ENCODE measurements at regions of chr12 and their contacts with region 1.

Region 1: DNA sequence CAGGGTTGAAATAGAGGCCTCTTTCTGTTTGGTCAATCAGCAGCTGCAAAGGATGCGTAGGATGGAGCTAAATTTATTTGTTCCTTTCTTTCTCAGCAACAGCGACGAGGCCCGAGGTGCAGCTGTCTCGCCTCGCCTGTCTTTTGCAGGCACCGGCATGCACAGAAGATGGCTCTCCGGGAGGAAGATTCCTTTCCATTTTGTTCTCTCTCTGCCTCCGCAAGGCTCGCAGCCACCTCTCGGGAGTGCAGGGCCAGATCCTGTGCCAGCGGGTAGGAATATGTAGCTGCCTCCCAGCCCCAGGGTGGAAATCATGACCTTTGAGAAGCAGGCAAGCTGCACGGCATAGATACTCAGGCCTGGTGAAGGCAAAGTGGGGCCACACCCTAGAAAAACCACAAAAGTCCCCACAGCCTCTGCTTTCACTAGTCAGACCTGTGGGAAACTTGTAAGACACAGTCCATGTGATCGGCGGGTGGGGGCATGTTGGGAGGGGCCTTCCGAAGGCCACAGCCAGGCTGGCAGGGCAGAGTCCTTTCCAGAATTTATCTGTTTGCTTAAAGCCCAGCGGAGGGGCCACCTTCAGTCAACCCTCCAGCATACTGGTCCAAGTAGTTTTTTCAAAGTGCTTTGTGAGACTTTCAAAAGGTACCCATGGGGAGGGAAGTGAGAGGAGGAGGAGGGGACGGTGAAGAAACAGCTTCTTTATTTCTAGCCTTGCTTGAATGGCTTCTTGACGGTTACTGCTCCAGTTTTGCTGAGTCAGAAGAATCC is at the start of gene MAP1LC3B2:
- DNase-seq: peak; percentile 53 to 85 (median 77)
- ATAC-seq: peak; percentile 92
- H3K4me3 ChIP-seq: peak within 1 kb of the TSS; percentile 54
- H3K4me3 Mint-ChIP-seq: peak within 1 kb of the TSS; percentile 70 to 90 (median 86)
- H3K27ac ChIP-seq: peak within 1 kb of the TSS; percentile 49
- H3K27ac Mint-ChIP-seq: peak within 1 kb of the TSS; percentile 88 to 99 (median 96)
- H3K4me1 ChIP-seq: peaks cover 29% of the 10 kb centered on the region in 2 donors
- H3K4me1 Mint-ChIP-seq: peaks cover 24 to 54% (median 48%) of the 10 kb centered on the region in 7 donors
- H3K27me3 ChIP-seq: no peaks in the 10 kb centered on the region
- H3K27me3 Mint-ChIP-seq: peaks cover 0 to 6% (median 0%) of the 10 kb centered on the region in 5 donors
- total RNA-seq, gene MAP1LC3B2: 0.48 to 6.6 (median 1.5) TPM

Region 2: GRCh38 chr12:116325336-116325664 is 234.0 kb before region 1 on chr12:
- CTCF ChIA-PET with region 1: no interaction called
- POLR2A ChIA-PET with region 1: no interaction called
- intact Hi-C with region 1: loop called in 1 of 2 experiments (anchors 1 kb)
- DNase-seq: peak in 7 of 9 donors; percentile 22 to 57 (median 41)
- ATAC-seq: peak; percentile 81
- H3K4me3 ChIP-seq: no peak overlapping the region
- H3K4me3 Mint-ChIP-seq: peak overlapping the region; percentile 19 to 69 (median 61)
- H3K27ac ChIP-seq: peak overlapping the region; percentile 0
- H3K27ac Mint-ChIP-seq: peak overlapping the region; percentile 80 to 93 (median 87)
- H3K4me1 ChIP-seq: peaks cover 0 to 22% of the 10 kb centered on the region in 2 donors
- H3K4me1 Mint-ChIP-seq: peaks cover 12 to 39% (median 31%) of the 10 kb centered on the region in 7 donors
- H3K27me3 ChIP-seq: no peaks in the 10 kb centered on the region
- H3K27me3 Mint-ChIP-seq: no peaks in the 10 kb centered on the region

Region 3: GRCh38 chr12:116508145-116509121 is 50.9 kb before region 1 on chr12:
- CTCF ChIA-PET with region 1: no interaction called
- POLR2A ChIA-PET with region 1: interaction called, 5 read pairs
- intact Hi-C with region 1: loop called in 1 of 2 experiments (anchors 2 kb)
- DNase-seq: peak in 6 of 9 donors; percentile 10 to 26 (median 12)
- ATAC-seq: peak; percentile 57
- H3K4me3 ChIP-seq: no peak overlapping the region
- H3K4me3 Mint-ChIP-seq: peak overlapping the region; percentile 67 to 84 (median 71)
- H3K27ac ChIP-seq: no peak overlapping the region
- H3K27ac Mint-ChIP-seq: no peak overlapping the region
- H3K4me1 ChIP-seq: no peaks in the 10 kb centered on the region
- H3K4me1 Mint-ChIP-seq: peaks cover 0 to 9% (median 6%) of the 10 kb centered on the region in 7 donors
- H3K27me3 ChIP-seq: no peaks in the 10 kb centered on the region
- H3K27me3 Mint-ChIP-seq: peaks cover 0 to 46% (median 4%) of the 10 kb centered on the region in 5 donors

Region 4: DNA sequence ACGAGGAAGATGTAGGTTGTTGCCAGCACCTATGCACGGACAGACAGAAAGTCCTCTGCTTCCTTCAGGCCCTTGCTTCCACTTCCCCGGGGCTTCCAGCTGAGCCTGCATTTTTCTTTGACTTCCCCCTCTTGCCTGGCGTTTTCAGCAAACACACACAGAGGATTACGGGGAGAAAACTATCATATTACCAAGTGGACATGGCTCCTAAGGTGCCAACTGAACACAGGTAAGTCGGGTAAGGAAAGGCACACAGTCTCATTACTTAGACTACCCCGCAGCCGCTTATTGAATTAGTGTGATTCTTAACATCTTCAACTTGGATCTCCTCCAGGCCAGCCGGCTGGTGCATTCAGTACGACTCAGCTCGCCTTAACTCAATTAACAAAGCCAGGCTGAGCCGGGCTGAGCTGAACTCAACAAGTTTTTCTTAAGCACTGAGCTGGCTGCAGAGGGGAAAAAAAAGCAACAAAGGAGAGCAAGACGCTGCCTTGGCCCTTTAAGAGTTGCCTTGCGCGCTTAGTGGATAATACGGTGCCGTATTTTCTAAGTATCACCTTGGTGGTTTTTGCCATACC is 19.4 kb before region 1 on chr12:
- CTCF ChIA-PET with region 1: interaction called, 5 read pairs
- POLR2A ChIA-PET with region 1: interaction called, 11 read pairs
- intact Hi-C with region 1: no loop called
- DNase-seq: no peak
- ATAC-seq: no peak
- H3K4me3 ChIP-seq: no peak overlapping the region
- H3K4me3 Mint-ChIP-seq: no peak overlapping the region
- H3K27ac ChIP-seq: no peak overlapping the region
- H3K27ac Mint-ChIP-seq: peak overlapping the region in 1 of 9 donors; percentile 10
- H3K4me1 ChIP-seq: no peaks in the 10 kb centered on the region
- H3K4me1 Mint-ChIP-seq: peaks cover 0 to 31% (median 11%) of the 10 kb centered on the region in 7 donors
- H3K27me3 ChIP-seq: no peaks in the 10 kb centered on the region
- H3K27me3 Mint-ChIP-seq: peaks cover 0 to 2% (median 0%) of the 10 kb centered on the region in 5 donors

Region 5: DNA sequence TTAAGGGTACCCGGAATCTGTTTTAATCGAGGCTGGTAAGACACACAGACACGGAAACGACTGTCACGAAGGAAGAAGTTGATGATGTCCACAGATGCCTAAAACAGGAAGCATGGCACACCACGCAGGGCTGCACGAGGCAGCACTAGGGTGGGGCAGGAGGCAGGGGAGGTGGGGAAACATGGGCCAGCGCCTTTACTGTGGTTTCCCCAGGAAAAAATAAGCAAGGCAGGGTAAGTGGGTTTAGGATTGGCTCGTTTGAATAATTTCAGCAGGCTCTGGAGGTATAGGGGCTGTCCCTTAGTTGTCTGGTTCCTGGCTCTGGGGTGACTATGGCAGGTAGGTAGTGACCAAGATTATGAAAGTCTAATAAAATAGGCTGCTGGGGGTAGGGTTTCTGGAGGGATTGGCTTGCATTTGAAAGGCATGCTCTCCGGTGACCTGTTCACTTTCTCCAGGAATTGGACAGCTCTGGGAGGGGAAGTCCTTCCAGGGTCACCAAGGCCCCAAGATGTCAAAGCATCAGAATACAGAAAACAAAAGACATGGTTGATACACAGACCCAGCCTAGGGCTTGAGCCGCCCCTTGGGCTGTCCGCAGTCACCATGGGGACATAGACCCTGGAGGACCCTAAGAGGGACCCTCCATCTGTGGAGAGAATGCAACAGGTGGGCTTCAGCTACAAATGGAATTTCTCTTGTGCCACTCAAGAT is 35.1 kb after region 1 on chr12:
- CTCF ChIA-PET with region 1: interaction called, 4 read pairs
- POLR2A ChIA-PET with region 1: interaction called, 3 read pairs
- intact Hi-C with region 1: loop called (anchors 1 kb)
- DNase-seq: peak; percentile 24 to 77 (median 69)
- ATAC-seq: peak; percentile 93
- H3K4me3 ChIP-seq: peak overlapping the region; percentile 5
- H3K4me3 Mint-ChIP-seq: peak overlapping the region; percentile 16 to 85 (median 63)
- H3K27ac ChIP-seq: no peak overlapping the region
- H3K27ac Mint-ChIP-seq: peak overlapping the region; percentile 42 to 78 (median 69)
- H3K4me1 ChIP-seq: peaks cover 9 to 32% of the 10 kb centered on the region in 2 donors
- H3K4me1 Mint-ChIP-seq: peaks cover 34 to 51% (median 47%) of the 10 kb centered on the region in 7 donors
- H3K27me3 ChIP-seq: no peaks in the 10 kb centered on the region
- H3K27me3 Mint-ChIP-seq: peaks cover 0 to 8% (median 0%) of the 10 kb centered on the region in 5 donors

Region 6: GRCh38 chr12:116818948-116819832 is 259.8 kb after region 1 on chr12:
- CTCF ChIA-PET with region 1: no interaction called
- POLR2A ChIA-PET with region 1: no interaction called
- intact Hi-C with region 1: loop called in 1 of 2 experiments (anchors 10 kb)
- DNase-seq: peak; percentile 86 to 94 (median 91)
- ATAC-seq: peak; percentile 90
- H3K4me3 ChIP-seq: peak overlapping the region; percentile 99
- H3K4me3 Mint-ChIP-seq: peak overlapping the region; percentile 78 to 99 (median 94)
- H3K27ac ChIP-seq: peak overlapping the region; percentile 97
- H3K27ac Mint-ChIP-seq: peak overlapping the region; percentile 87 to 99 (median 96)
- H3K4me1 ChIP-seq: peaks cover 7 to 11% of the 10 kb centered on the region in 2 donors
- H3K4me1 Mint-ChIP-seq: peaks cover 12 to 31% (median 24%) of the 10 kb centered on the region in 7 donors
- H3K27me3 ChIP-seq: no peaks in the 10 kb centered on the region
- H3K27me3 Mint-ChIP-seq: no peaks in the 10 kb centered on the region